Naive thymus-derived CD4-positive, alpha-beta T cell (primary cell): ENCODE measurements at regions of chr2 and their contacts with region 1.

Region 1: GRCh38 chr2:168346725-168347477 is 99.5 kb upstream of the STK39 start:
- DNase-seq: peak; percentile 36 to 76 (median 64)
- ATAC-seq: peak; percentile 89
- H3K4me3 ChIP-seq: peak overlapping the region; percentile 43
- H3K4me3 Mint-ChIP-seq: peak overlapping the region; percentile 80 to 96 (median 88)
- H3K27ac ChIP-seq: no peak overlapping the region
- H3K27ac Mint-ChIP-seq: peak overlapping the region in 7 of 9 donors; percentile 11 to 89 (median 71)
- H3K4me1 ChIP-seq: no peaks in the 10 kb centered on the region
- H3K4me1 Mint-ChIP-seq: peaks cover 2 to 9% (median 8%) of the 10 kb centered on the region in 7 donors
- H3K27me3 ChIP-seq: no peaks in the 10 kb centered on the region
- H3K27me3 Mint-ChIP-seq: peaks cover 0 to 36% (median 0%) of the 10 kb centered on the region in 5 donors

Region 2: DNA sequence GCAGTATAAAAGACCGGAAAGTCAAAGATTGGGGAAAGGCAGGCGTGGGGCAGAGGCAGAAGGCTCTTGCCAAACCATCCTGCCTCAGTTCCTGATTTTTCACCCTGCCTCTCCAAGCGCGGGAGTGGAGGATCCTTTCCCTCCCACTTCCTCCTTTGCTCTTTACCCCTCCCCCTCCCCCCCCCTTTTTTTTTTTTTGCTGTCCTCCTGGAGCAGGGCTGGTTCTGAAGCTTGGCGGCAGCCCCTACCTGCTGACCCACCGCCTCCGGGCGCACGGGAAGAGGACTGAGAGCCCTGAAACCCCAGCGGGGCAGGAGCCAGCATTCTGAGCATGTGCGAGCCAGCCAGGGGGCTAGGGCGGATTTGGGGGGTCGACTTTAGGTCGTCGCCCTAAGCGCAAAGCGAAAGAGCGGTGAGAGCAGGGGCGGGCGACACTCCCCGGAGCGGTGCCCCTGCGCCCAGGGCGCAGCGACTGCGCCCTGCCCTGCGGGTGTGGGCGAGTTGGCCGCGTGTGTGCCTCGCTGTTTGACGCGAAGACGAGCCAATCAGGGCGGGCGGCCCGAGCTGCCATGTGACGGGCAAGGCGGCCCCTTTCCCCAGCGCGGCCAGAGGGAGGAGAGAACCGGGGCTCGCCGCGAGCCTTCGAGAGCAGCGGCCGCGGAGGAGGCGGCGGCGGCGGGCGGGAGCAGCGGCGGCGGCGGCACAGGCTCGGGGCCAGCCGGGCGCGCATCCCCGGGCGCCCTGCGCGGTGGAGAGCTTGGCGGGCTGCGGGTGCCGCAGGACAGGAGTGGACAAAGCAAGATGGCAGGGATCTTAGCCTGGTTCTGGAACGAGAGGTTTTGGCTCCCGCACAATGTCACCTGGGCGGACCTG is 109.0 kb after region 1 on chr2 and contains the start of gene CERS6:
- CTCF ChIA-PET with region 1: interaction called, 7 read pairs
- POLR2A ChIA-PET with region 1: no interaction called
- intact Hi-C with region 1: loop called (anchors 2 kb)
- DNase-seq: peak; percentile 47 to 88 (median 62)
- ATAC-seq: peak; percentile 92
- H3K4me3 ChIP-seq: peak within 1 kb of the TSS; percentile 59
- H3K4me3 Mint-ChIP-seq: peak within 1 kb of the TSS in 2 of 10 donors; percentile 87 to 99
- H3K27ac ChIP-seq: peak within 1 kb of the TSS; percentile 63
- H3K27ac Mint-ChIP-seq: peak within 1 kb of the TSS in 8 of 9 donors; percentile 63 to 81 (median 70)
- H3K4me1 ChIP-seq: peaks cover 0 to 24% of the 10 kb centered on the region in 2 donors
- H3K4me1 Mint-ChIP-seq: peaks cover 16 to 41% (median 34%) of the 10 kb centered on the region in 7 donors
- H3K27me3 ChIP-seq: no peaks in the 10 kb centered on the region
- H3K27me3 Mint-ChIP-seq: no peaks in the 10 kb centered on the region
- total RNA-seq, gene CERS6: 17.3 to 28.4 (median 20.9) TPM

Region 3: GRCh38 chr2:168583064-168583709 is 236.3 kb after region 1 on chr2:
- CTCF ChIA-PET with region 1: no interaction called
- POLR2A ChIA-PET with region 1: no interaction called
- intact Hi-C with region 1: loop called in 1 of 2 experiments (anchors 5 kb)
- DNase-seq: no peak
- ATAC-seq: peak; percentile 50
- H3K4me3 ChIP-seq: no peak overlapping the region
- H3K4me3 Mint-ChIP-seq: peak overlapping the region; percentile 11 to 74 (median 48)
- H3K27ac ChIP-seq: no peak overlapping the region
- H3K27ac Mint-ChIP-seq: peak overlapping the region; percentile 9 to 93 (median 63)
- H3K4me1 ChIP-seq: peaks cover 0 to 26% of the 10 kb centered on the region in 2 donors
- H3K4me1 Mint-ChIP-seq: peaks cover 38 to 80% (median 69%) of the 10 kb centered on the region in 7 donors
- H3K27me3 ChIP-seq: no peaks in the 10 kb centered on the region
- H3K27me3 Mint-ChIP-seq: no peaks in the 10 kb centered on the region

Region 4: GRCh38 chr2:168626096-168626495 is 279.2 kb after region 1 on chr2:
- CTCF ChIA-PET with region 1: no interaction called
- POLR2A ChIA-PET with region 1: no interaction called
- intact Hi-C with region 1: loop called in 1 of 2 experiments (anchors 5 kb)
- DNase-seq: peak in 1 of 9 donors; percentile 6
- ATAC-seq: peak; percentile 57
- H3K4me3 ChIP-seq: no peak overlapping the region
- H3K4me3 Mint-ChIP-seq: peak overlapping the region in 5 of 10 donors; percentile 11 to 48 (median 26)
- H3K27ac ChIP-seq: no peak overlapping the region
- H3K27ac Mint-ChIP-seq: peak overlapping the region in 6 of 9 donors; percentile 13 to 56 (median 27)
- H3K4me1 ChIP-seq: peaks cover 0 to 14% of the 10 kb centered on the region in 2 donors
- H3K4me1 Mint-ChIP-seq: peaks cover 6 to 81% (median 57%) of the 10 kb centered on the region in 7 donors
- H3K27me3 ChIP-seq: no peaks in the 10 kb centered on the region
- H3K27me3 Mint-ChIP-seq: no peaks in the 10 kb centered on the region

Region 5: GRCh38 chr2:168705534-168706470 is 358.9 kb after region 1 on chr2:
- CTCF ChIA-PET with region 1: interaction called, 20 read pairs
- POLR2A ChIA-PET with region 1: interaction called, 3 read pairs
- intact Hi-C with region 1: loop called (anchors 1 kb)
- DNase-seq: peak in 4 of 9 donors; percentile 4 to 31 (median 16)
- ATAC-seq: no peak
- H3K4me3 ChIP-seq: no peak overlapping the region
- H3K4me3 Mint-ChIP-seq: no peak overlapping the region
- H3K27ac ChIP-seq: no peak overlapping the region
- H3K27ac Mint-ChIP-seq: peak overlapping the region in 2 of 9 donors; percentile 3 to 42
- H3K4me1 ChIP-seq: no peaks in the 10 kb centered on the region
- H3K4me1 Mint-ChIP-seq: peaks cover 0 to 20% (median 13%) of the 10 kb centered on the region in 7 donors
- H3K27me3 ChIP-seq: no peaks in the 10 kb centered on the region
- H3K27me3 Mint-ChIP-seq: no peaks in the 10 kb centered on the region

Region 6: DNA sequence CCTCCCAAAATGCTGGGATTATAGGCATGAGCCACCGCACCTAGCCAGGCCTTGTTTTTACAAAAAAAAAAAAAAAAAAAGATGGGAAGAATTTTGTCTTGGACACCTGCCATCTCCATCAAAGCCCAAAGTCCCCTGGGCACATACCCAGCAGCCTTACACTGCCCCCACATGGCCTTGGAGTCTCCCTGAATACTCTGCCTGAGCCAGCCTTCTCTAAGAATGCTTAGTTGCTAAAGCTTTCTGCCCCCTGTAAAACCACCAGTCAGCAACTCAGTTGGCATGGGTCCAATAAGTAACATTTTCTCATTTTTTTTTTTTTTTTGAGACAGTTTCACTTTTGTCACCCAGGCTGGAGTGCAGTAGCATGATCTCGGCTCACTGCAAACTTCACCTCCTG is 502.7 kb after region 1 on chr2:
- CTCF ChIA-PET with region 1: no interaction called
- POLR2A ChIA-PET with region 1: no interaction called
- intact Hi-C with region 1: loop called in 1 of 2 experiments (anchors 2 kb)
- DNase-seq: no peak
- ATAC-seq: no peak
- H3K4me3 ChIP-seq: no peak overlapping the region
- H3K4me3 Mint-ChIP-seq: no peak overlapping the region
- H3K27ac ChIP-seq: no peak overlapping the region
- H3K27ac Mint-ChIP-seq: no peak overlapping the region
- H3K4me1 ChIP-seq: no peaks in the 10 kb centered on the region
- H3K4me1 Mint-ChIP-seq: peaks cover 0 to 3% (median 0%) of the 10 kb centered on the region in 7 donors
- H3K27me3 ChIP-seq: no peaks in the 10 kb centered on the region
- H3K27me3 Mint-ChIP-seq: no peaks in the 10 kb centered on the region